Posterior vena cava (tissue), 2 donors: ENCODE measurements at regions of chr5 and their contacts with region 1.

Region 1: GRCh38 chr5:169745441-169746146 is 108.5 kb downstream of the DOCK2 start:
- DNase-seq: no peak

Region 2: DNA sequence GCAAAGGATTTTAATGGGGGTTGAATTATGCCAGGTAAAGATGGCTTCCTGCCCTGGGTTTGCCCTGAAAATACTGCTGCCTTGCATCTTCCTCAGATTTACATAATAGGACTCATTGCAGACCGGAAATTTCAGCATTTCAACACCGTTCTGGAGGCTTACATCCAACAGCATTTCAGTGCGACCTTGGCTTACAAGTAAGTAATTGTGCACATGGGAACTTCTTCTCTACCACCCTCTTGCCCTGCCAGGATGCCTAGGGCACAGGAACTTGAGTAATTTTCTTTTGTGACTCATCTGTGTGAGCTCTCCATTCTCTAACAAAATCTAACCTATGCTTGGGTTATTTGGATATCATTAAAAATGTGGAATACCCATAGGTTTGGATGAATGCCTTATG is 28.3 kb before region 1 on chr5:
- intact Hi-C with region 1: loop called in 1 of 2 experiments (anchors 1 kb)
- DNase-seq: no peak

Region 3: GRCh38 chr5:169778622-169779596 is 33.3 kb after region 1 on chr5:
- intact Hi-C with region 1: no loop called
- DNase-seq: no peak

Region 4: DNA sequence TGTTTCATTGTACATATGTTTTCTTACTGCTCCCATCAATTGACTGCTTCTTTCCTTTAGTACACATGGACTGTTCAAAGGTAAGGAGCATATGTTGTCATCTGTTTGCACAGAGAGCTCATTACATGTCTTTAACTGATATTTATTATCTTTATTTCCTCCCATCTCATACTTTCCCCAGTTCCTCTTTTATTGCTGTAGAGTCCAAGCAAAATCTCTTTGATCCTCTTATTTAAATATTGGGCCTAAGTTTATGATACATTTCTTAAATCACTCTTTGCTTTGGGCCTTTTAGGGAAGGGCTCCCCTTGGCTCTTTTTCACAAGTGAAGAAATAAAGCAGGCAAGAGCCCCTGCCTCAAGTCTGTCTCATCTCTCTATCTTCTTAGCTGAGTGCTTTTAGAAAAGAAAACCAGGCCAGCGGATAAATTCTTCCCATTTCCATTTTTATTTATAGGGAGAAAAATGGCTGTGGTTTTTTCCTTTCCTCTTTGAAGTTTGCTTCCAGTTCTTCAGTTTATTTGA is 43.9 kb after region 1 on chr5:
- intact Hi-C with region 1: no loop called
- DNase-seq: no peak

Region 5: GRCh38 chr5:169914766-169915165 is 169.2 kb after region 1 on chr5:
- intact Hi-C with region 1: no loop called
- DNase-seq: no peak